Endothelial cell of umbilical vein (primary cell): ENCODE measurements at regions of chr3 and their contacts with region 1.

Region 1: GRCh38 chr3:99172736-99173657 is 271.5 kb upstream of the DCBLD2 start:
- DNase-seq: peak; percentile 76
- H3K4me3 ChIP-seq: no peak overlapping the region
- H3K27ac ChIP-seq: no peak overlapping the region
- H3K4me1 ChIP-seq: no peaks in the 10 kb centered on the region
- H3K27me3 ChIP-seq: no peaks in the 10 kb centered on the region
- CTCF ChIP-seq: peak; percentile 72 to 74
- POLR2A ChIP-seq: no peak

Region 2: GRCh38 chr3:99023590-99024192 is 149.3 kb before region 1 on chr3:
- CTCF ChIA-PET with region 1: interaction called, 123 read pairs
- POLR2A ChIA-PET with region 1: no interaction called
- dilution Hi-C with region 1: no loop called
- intact Hi-C with region 1: loop called (anchors 1 kb)
- DNase-seq: peak; percentile 66
- H3K4me3 ChIP-seq: no peak overlapping the region
- H3K27ac ChIP-seq: no peak overlapping the region
- H3K4me1 ChIP-seq: no peaks in the 10 kb centered on the region
- H3K27me3 ChIP-seq: no peaks in the 10 kb centered on the region
- CTCF ChIP-seq: peak; percentile 40 to 46
- POLR2A ChIP-seq: no peak

Region 3: DNA sequence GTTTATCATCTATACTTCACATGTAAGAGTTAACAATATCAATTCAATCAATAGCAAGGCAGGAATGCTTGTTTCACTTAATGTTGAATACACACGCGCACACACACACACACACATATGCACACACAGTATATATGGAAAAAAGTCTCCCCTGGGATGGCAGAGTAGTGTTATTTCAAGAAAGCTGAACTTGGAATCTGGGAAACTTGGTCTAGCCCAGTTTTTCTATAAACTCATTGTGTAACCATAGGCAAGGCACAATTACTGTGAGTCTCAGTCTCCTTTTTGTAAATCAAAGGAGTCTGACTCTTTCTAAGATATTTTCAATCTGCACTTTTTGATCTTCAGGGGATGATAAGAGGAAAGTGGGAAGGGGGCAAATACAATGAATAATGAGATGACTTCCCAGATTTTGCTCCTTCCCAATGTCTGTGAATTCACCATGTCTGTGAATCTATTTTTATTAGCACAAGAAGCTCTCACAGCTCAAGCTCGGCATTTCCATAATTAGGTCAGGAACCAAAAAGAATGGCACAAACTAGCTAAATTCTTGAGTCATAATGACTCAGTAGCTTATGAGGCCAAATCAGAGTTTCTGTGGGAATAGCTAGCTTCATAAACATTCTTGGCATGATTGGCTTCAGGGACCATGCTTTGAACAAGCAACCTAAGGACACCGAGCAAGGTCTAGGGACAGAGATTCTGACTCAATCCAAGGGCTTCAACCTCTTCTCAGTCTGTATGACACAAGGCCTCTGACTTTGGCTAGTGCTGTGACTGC is 44.1 kb before region 1 on chr3:
- CTCF ChIA-PET with region 1: interaction called, 23 read pairs
- POLR2A ChIA-PET with region 1: no interaction called
- dilution Hi-C with region 1: no loop called
- intact Hi-C with region 1: no loop called
- DNase-seq: peak; percentile 91
- H3K4me3 ChIP-seq: no peak overlapping the region
- H3K27ac ChIP-seq: peak overlapping the region; percentile 76
- H3K4me1 ChIP-seq: peaks cover 23% of the 10 kb centered on the region
- H3K27me3 ChIP-seq: no peaks in the 10 kb centered on the region
- CTCF ChIP-seq: no peak
- POLR2A ChIP-seq: no peak

Region 4: DNA sequence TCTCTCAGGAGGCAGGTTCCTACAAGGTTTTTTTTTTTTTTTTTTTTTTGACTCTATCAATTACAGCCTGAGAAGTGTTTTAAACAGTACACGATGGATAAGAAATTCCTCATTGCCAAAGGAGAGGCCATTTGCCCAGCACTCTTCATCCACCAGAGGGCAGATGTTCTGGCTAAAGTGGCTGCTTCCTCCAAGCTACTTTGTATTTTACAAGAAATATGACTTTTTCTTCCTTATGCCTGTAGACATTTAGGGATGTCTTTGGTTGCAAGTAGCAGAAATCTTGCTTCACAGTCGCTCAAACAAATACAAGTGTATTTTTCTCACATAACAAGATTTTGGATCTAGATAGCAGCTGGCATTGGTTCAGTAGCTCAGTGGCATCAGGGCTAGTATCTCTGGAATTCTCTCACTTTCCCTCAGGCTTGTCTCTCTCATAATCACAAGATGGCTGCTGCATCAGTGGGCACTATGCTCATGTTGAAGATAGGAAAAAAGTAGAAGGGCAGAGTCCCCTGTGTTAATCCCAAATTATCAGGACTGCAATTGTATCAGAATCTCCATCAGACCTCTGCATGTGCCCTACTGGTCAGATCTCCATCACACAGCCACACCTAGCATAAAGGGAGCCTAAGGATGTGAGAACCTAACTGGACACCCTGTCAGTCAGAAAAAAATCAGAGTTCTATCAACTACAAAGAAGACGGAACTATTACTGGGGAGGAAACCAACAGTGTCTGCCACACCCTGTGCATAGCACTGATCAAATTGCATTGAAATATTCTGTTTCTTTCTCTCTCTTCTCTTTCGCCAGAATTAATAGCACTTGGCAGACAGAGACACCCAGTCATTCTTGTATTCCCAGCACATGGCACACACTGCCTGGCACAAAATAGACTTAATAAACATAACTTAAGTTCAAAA is 326.5 kb after region 1 on chr3:
- CTCF ChIA-PET with region 1: interaction called, 15 read pairs
- POLR2A ChIA-PET with region 1: no interaction called
- dilution Hi-C with region 1: no loop called
- intact Hi-C with region 1: no loop called
- DNase-seq: peak; percentile 80
- H3K4me3 ChIP-seq: no peak overlapping the region
- H3K27ac ChIP-seq: no peak overlapping the region
- H3K4me1 ChIP-seq: peaks cover 27% of the 10 kb centered on the region
- H3K27me3 ChIP-seq: no peaks in the 10 kb centered on the region
- CTCF ChIP-seq: peak; percentile 71 to 76
- POLR2A ChIP-seq: no peak

Region 5: GRCh38 chr3:99747915-99748314 is 574.9 kb after region 1 on chr3:
- CTCF ChIA-PET with region 1: interaction called, 31 read pairs
- POLR2A ChIA-PET with region 1: no interaction called
- dilution Hi-C with region 1: no loop called
- intact Hi-C with region 1: loop called (anchors 1 kb)
- DNase-seq: peak; percentile 62
- H3K4me3 ChIP-seq: no peak overlapping the region
- H3K27ac ChIP-seq: peak overlapping the region; percentile 12
- H3K4me1 ChIP-seq: peaks cover 24% of the 10 kb centered on the region
- H3K27me3 ChIP-seq: no peaks in the 10 kb centered on the region
- CTCF ChIP-seq: peak; percentile 23 to 27
- POLR2A ChIP-seq: no peak